PC-9 (cell line): ENCODE measurements at regions of chr22 and their contacts with region 1.

Region 1: DNA sequence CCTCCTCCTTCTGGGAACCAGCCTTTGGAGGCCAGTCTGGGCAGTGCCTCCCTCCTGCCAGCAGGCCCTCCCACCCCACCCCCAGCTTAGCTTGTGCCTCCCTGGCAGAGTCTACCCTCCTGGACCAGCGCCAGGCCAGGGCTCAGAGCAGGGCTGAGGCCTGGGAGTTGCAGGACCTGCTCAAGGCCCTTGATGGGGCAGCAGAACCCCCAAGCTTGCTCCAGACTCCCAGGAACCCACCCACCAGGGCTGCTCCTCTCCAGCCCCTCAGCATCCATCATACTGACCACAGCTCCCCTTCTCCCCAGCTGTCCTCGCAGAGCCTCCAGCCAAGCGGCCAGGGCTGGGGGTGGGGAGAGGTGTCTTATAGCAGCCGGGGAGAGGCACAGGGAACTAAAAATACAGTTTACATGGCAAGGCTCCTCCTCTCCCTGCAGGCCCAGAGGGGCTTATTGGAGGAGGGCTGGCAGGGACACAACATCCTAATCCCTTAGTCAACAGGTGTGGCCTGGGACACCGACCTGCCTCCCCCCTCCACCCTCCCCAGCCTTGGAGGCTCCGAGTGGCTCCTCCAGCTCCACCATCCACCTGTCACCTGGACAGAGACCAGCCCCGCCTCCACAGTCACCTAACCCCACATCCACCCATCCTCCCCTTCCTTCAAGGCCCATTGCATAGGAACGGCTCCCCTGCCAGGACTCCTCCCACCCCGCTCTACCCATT is 5.2 kb upstream of the MB start:
- DNase-seq: peak; percentile 96 to 99
- H3K4me3 ChIP-seq: peak overlapping the region; percentile 48; the same call in 1 of the 2 replicates
- H3K27ac ChIP-seq: peak overlapping the region; percentile 83
- H3K4me1 ChIP-seq: peaks cover 44% of the 10 kb centered on the region
- H3K27me3 ChIP-seq: no peaks in the 10 kb centered on the region
- CTCF ChIP-seq: no peak

Region 2: GRCh38 chr22:35357883-35358621 is 264.3 kb before region 1 on chr22:
- CTCF ChIA-PET with region 1: no interaction called
- POLR2A ChIA-PET with region 1: interaction called, 3 read pairs
- intact Hi-C with region 1: loop called (anchors 2 kb)
- DNase-seq: peak; percentile 78 to 98
- H3K4me3 ChIP-seq: no peak overlapping the region
- H3K27ac ChIP-seq: peak overlapping the region; percentile 74
- H3K4me1 ChIP-seq: peaks cover 8% of the 10 kb centered on the region
- H3K27me3 ChIP-seq: no peaks in the 10 kb centered on the region
- CTCF ChIP-seq: no peak

Region 3: DNA sequence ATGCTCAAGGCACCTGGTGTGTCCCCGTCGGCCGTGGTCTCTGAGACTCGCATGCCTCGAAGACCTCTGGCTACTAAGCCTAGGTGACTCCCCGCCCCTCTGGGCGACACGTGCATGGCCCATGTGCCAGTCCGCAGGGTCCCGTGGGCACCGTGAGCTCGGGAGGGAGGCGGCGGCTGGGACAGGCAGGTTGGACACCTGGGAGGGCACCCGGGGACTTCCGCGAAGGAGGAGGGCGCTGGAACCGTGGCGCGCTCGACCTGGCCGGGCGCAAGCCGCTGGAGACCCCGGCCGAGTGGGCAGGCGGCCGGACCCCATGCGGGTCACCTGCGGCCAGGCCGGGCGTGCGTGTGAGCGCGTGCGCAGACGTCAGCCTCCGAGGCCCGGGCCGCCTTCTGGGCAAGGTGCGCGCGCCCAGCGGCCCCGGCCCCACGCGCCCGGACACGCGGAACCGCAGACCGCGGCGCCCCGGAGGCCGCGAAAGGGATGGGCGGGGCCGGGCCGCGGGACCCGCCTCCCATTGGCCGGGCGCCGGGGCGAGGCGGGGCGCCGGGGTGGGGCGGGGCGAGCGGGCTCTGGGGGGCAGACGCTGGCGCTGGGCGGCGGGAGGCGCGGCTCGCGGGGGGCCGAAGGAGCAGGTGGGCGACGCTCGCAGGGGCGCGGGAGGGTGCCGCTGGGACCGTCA is 82.3 kb before region 1 on chr22:
- CTCF ChIA-PET with region 1: no interaction called
- POLR2A ChIA-PET with region 1: no interaction called
- intact Hi-C with region 1: loop called (anchors 5 kb)
- DNase-seq: peak in 1 of 2 experiments; percentile 58
- H3K4me3 ChIP-seq: peak overlapping the region; percentile 90
- H3K27ac ChIP-seq: no peak overlapping the region
- H3K4me1 ChIP-seq: peaks cover 32% of the 10 kb centered on the region
- H3K27me3 ChIP-seq: no peaks in the 10 kb centered on the region
- CTCF ChIP-seq: no peak

Region 4: GRCh38 chr22:35582861-35583670 is 39.3 kb before region 1 on chr22:
- CTCF ChIA-PET with region 1: interaction called, 7 read pairs
- POLR2A ChIA-PET with region 1: interaction called, 5 read pairs
- intact Hi-C with region 1: loop called (anchors 1 kb)
- DNase-seq: peak; percentile 61 to 62
- H3K4me3 ChIP-seq: peak overlapping the region; percentile 39
- H3K27ac ChIP-seq: peak overlapping the region; percentile 39; the same call in 1 of the 2 replicates
- H3K4me1 ChIP-seq: peaks cover 56% of the 10 kb centered on the region
- H3K27me3 ChIP-seq: no peaks in the 10 kb centered on the region
- CTCF ChIP-seq: peak; percentile 97

Region 5: DNA sequence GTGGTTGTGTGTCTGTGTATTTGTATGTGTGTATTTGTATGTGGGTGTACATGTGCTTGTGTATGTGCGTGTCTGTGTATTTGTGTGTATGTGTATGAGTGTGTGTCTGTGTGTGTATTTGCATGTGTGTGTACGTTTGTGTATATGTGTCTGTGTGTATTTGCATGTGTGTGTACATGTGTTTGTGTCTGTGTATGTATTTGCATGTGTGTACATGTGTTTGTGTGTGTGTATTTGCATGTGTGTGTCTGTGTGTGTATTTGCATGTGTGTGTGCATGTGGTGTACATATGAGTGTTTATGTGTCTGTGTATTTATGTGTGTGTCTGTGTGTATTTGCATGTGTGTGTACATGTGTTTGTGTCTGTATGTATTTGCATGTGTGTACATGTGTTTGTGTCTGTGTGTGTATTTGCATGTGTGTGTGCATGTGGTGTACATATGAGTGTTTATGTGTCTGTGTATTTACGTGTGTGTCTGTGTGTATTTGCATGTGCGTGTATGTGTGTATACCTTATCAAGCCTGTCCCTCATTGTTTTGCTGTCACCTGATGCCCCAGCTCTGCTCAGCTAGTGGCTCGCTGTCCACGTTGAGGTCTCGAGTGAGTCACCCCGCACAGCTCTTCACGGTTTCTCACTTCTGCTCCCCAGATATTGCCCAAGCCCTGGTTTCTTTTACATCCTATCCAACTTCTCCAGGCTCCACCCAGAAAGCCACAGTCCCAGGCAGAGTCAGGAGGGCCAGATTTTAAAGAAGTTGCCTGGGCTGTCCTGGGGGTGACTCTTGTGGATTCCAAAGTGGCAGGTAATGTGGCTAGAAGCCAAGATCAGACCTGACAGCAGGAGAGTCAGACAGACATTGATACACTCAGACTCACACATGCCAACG is 20.4 kb before region 1 on chr22:
- CTCF ChIA-PET with region 1: interaction called, 4 read pairs
- POLR2A ChIA-PET with region 1: interaction called, 5 read pairs
- intact Hi-C with region 1: loop called (anchors 1 kb)
- DNase-seq: peak; percentile 91 to 100
- H3K4me3 ChIP-seq: no peak overlapping the region
- H3K27ac ChIP-seq: peak overlapping the region; percentile 91
- H3K4me1 ChIP-seq: peaks cover 65% of the 10 kb centered on the region
- H3K27me3 ChIP-seq: no peaks in the 10 kb centered on the region
- CTCF ChIP-seq: no peak

Region 6: DNA sequence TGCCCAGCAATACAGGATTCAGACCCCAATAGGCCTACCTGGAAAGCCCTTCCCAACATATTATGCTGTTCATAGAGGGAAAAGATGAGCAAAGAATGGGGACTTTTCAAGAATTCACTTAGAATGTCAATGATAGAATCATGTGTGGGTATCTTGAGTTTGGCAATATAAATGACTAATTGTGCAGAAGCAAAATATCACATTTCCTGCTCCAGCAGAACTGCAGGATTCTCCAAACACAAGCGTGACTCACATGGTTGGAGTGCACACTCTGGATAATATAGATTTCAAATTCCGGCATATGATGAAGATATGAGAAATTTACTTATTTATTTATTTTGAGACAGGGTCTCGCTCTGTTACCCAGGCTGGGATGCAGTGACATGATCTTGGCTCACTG is 82.8 kb after region 1 on chr22:
- CTCF ChIA-PET with region 1: no interaction called
- POLR2A ChIA-PET with region 1: no interaction called
- intact Hi-C with region 1: no loop called
- DNase-seq: peak; percentile 19 to 88
- H3K4me3 ChIP-seq: no peak overlapping the region
- H3K27ac ChIP-seq: peak overlapping the region; percentile 55
- H3K4me1 ChIP-seq: peaks cover 15% of the 10 kb centered on the region
- H3K27me3 ChIP-seq: no peaks in the 10 kb centered on the region
- CTCF ChIP-seq: no peak